Naive thymus-derived CD4-positive, alpha-beta T cell (primary cell): ENCODE measurements at regions of chr10 and their contacts with region 1.

Region 1: GRCh38 chr10:124719213-124719851 is 24.8 kb downstream of the FAM53B start:
- DNase-seq: peak in 8 of 9 donors; percentile 49 to 85 (median 80)
- ATAC-seq: peak; percentile 63
- H3K4me3 ChIP-seq: peak overlapping the region; percentile 19
- H3K4me3 Mint-ChIP-seq: peak overlapping the region; percentile 46 to 91 (median 73)
- H3K27ac ChIP-seq: peak overlapping the region; percentile 72
- H3K27ac Mint-ChIP-seq: peak overlapping the region; percentile 83 to 99 (median 94)
- H3K4me1 ChIP-seq: peaks cover 82 to 96% of the 10 kb centered on the region in 2 donors
- H3K4me1 Mint-ChIP-seq: peaks cover 80 to 99% (median 88%) of the 10 kb centered on the region in 7 donors
- H3K27me3 ChIP-seq: no peaks in the 10 kb centered on the region
- H3K27me3 Mint-ChIP-seq: no peaks in the 10 kb centered on the region

Region 2: DNA sequence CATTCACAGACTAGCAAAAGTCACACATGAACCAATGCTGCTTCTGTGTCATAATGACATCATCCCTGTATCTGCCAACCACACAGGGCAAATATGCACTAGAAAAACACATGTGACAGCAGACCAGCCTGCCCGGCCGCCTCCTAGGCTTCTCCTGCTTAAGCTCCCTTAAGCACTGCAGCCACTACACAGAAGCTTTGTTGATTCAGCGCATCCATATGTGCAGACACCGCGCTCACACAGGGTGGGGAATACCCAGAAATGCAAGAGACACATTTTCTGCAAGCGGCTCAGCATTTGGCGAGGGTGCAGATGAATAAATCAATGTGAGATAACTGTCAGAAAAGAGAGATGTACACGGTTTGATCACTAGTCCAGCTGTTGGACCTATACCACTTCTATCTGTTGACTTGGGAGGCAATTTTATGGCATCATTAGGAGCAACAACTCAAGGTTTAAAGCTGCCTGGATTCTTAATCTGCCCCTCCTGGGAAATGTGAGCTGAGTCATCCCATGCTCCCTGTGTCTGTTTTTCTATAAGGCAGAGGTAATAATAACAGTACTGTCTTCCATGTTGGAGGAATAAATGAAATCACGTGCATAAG is 861.2 kb before region 1 on chr10:
- CTCF ChIA-PET with region 1: no interaction called
- POLR2A ChIA-PET with region 1: no interaction called
- intact Hi-C with region 1: no loop called
- DNase-seq: no peak
- ATAC-seq: no peak
- H3K4me3 ChIP-seq: no peak overlapping the region
- H3K4me3 Mint-ChIP-seq: no peak overlapping the region
- H3K27ac ChIP-seq: no peak overlapping the region
- H3K27ac Mint-ChIP-seq: no peak overlapping the region
- H3K4me1 ChIP-seq: no peaks in the 10 kb centered on the region
- H3K4me1 Mint-ChIP-seq: no peaks in the 10 kb centered on the region
- H3K27me3 ChIP-seq: no peaks in the 10 kb centered on the region
- H3K27me3 Mint-ChIP-seq: peaks cover 0 to 22% (median 0%) of the 10 kb centered on the region in 5 donors

Region 3: DNA sequence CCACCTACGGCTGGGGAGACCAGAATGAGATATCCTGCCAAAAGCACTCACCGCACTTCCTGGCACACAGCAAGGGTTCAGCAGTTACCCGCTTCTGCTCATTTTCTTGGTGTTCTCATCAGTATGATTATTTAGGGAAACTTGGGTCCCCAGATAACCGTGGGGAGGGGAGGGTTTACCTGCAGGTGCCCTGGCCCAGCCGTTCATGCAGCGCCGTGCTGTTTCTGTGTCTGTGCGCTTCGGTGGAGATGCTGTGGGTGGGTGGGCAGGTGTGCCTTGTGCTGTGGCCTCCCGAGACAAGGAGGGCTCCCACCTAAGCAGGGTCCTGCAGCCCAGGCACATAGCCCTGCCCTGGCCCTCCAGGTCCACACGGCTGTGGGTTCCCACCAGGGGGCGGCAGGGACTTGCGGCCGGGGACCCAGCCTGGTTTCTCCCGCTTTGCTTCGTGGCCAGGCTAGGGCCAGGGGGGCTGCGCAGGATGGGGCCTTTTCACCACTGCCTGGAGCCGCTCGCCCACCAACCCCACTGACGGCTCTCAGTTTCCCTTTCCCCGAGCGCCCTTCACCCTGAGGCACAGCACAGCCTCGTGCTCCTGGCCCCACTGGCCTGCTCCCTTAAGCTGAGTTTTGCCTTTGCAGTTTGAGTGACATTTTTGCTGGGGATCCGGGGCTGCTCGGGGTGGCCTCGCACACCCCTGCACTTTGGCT is 179.2 kb before region 1 on chr10:
- CTCF ChIA-PET with region 1: interaction called, 7 read pairs
- POLR2A ChIA-PET with region 1: no interaction called
- intact Hi-C with region 1: loop called in 1 of 2 experiments (anchors 1 kb)
- DNase-seq: peak; percentile 34 to 70 (median 58)
- ATAC-seq: peak; percentile 83
- H3K4me3 ChIP-seq: no peak overlapping the region
- H3K4me3 Mint-ChIP-seq: peak overlapping the region in 1 of 10 donors; percentile 16
- H3K27ac ChIP-seq: no peak overlapping the region
- H3K27ac Mint-ChIP-seq: peak overlapping the region in 2 of 9 donors; percentile 12 to 28
- H3K4me1 ChIP-seq: peaks cover 0 to 10% of the 10 kb centered on the region in 2 donors
- H3K4me1 Mint-ChIP-seq: peaks cover 0 to 10% (median 7%) of the 10 kb centered on the region in 7 donors
- H3K27me3 ChIP-seq: no peaks in the 10 kb centered on the region
- H3K27me3 Mint-ChIP-seq: no peaks in the 10 kb centered on the region

Region 4: DNA sequence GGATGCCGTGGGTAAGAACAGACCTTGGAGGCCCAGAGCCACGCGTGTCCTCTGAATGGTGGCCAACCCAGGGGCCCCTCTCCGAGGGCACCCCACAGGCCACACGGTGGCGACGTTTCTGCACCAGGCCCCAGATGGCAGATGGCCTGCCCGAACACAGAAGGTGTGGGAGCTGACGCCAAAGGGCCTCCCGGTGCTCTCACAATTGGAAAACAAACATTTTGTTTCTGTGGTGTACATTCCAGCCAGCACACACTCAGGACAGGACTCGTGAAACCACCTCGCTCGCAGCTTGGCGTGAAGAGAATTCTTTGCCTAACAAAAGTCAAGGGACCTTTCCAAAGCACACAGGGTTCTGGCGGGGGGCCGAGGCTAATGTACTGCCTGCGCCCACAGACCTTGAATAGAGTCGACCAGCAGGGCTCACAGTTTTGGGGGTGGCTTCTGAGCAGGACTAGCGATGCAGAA is 87.2 kb before region 1 on chr10:
- CTCF ChIA-PET with region 1: interaction called, 21 read pairs
- POLR2A ChIA-PET with region 1: interaction called, 17 read pairs
- intact Hi-C with region 1: loop called in 1 of 2 experiments (anchors 1 kb)
- DNase-seq: peak in 2 of 9 donors; percentile 36 to 51
- ATAC-seq: peak; percentile 43
- H3K4me3 ChIP-seq: no peak overlapping the region
- H3K4me3 Mint-ChIP-seq: peak overlapping the region in 1 of 10 donors; percentile 7
- H3K27ac ChIP-seq: no peak overlapping the region
- H3K27ac Mint-ChIP-seq: peak overlapping the region in 2 of 9 donors; percentile 40 to 53
- H3K4me1 ChIP-seq: peaks cover 25 to 47% of the 10 kb centered on the region in 2 donors
- H3K4me1 Mint-ChIP-seq: peaks cover 29 to 78% (median 67%) of the 10 kb centered on the region in 7 donors
- H3K27me3 ChIP-seq: no peaks in the 10 kb centered on the region
- H3K27me3 Mint-ChIP-seq: peaks cover 0 to 8% (median 0%) of the 10 kb centered on the region in 5 donors

Region 5: DNA sequence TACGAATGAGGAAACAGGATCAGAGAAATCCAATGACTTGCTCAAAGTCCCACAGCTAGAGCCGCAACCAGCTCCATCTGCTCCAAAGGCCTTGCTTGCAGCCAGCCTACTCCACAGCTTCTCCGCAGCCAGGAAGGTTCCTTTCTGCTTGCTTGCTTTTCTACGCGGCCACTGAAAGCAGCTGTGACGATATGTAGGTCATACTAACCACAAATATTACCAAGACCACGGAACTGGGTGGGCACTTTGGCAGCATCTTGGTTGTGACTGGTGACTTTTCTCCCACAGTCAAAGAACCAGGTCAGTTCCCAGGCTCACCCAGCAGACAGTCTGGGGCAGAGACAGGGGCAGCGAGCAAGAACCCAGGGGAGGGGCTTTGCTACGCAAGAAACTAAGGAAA is 61.5 kb before region 1 on chr10:
- CTCF ChIA-PET with region 1: interaction called, 10 read pairs
- POLR2A ChIA-PET with region 1: interaction called, 11 read pairs
- intact Hi-C with region 1: no loop called
- DNase-seq: no peak
- ATAC-seq: peak; percentile 66
- H3K4me3 ChIP-seq: peak overlapping the region; percentile 29
- H3K4me3 Mint-ChIP-seq: peak overlapping the region in 7 of 10 donors; percentile 4 to 52 (median 28)
- H3K27ac ChIP-seq: no peak overlapping the region
- H3K27ac Mint-ChIP-seq: peak overlapping the region in 7 of 9 donors; percentile 33 to 80 (median 69)
- H3K4me1 ChIP-seq: peaks cover 45 to 84% of the 10 kb centered on the region in 2 donors
- H3K4me1 Mint-ChIP-seq: peaks cover 47 to 84% (median 72%) of the 10 kb centered on the region in 7 donors
- H3K27me3 ChIP-seq: no peaks in the 10 kb centered on the region
- H3K27me3 Mint-ChIP-seq: no peaks in the 10 kb centered on the region

Region 6: GRCh38 chr10:124677749-124678556 is 41.4 kb before region 1 on chr10:
- CTCF ChIA-PET with region 1: interaction called, 55 read pairs
- POLR2A ChIA-PET with region 1: interaction called, 24 read pairs
- intact Hi-C with region 1: loop called in 1 of 2 experiments (anchors 1 kb)
- DNase-seq: no peak
- ATAC-seq: no peak
- H3K4me3 ChIP-seq: peak overlapping the region; percentile 37
- H3K4me3 Mint-ChIP-seq: peak overlapping the region; percentile 70 to 93 (median 81)
- H3K27ac ChIP-seq: peak overlapping the region; percentile 47
- H3K27ac Mint-ChIP-seq: peak overlapping the region; percentile 79 to 97 (median 91)
- H3K4me1 ChIP-seq: peaks cover 77 to 91% of the 10 kb centered on the region in 2 donors
- H3K4me1 Mint-ChIP-seq: peaks cover 53 to 94% (median 85%) of the 10 kb centered on the region in 7 donors
- H3K27me3 ChIP-seq: no peaks in the 10 kb centered on the region
- H3K27me3 Mint-ChIP-seq: no peaks in the 10 kb centered on the region

Region 7: GRCh38 chr10:124697830-124698544 is 21.3 kb before region 1 on chr10:
- CTCF ChIA-PET with region 1: interaction called, 81 read pairs
- POLR2A ChIA-PET with region 1: interaction called, 271 read pairs
- intact Hi-C with region 1: loop called (anchors 1 kb)
- DNase-seq: peak in 4 of 9 donors; percentile 12 to 50 (median 41)
- ATAC-seq: peak; percentile 68
- H3K4me3 ChIP-seq: no peak overlapping the region
- H3K4me3 Mint-ChIP-seq: peak overlapping the region in 9 of 10 donors; percentile 53 to 82 (median 73)
- H3K27ac ChIP-seq: peak overlapping the region; percentile 67
- H3K27ac Mint-ChIP-seq: peak overlapping the region; percentile 84 to 97 (median 91)
- H3K4me1 ChIP-seq: peaks cover 66 to 90% of the 10 kb centered on the region in 2 donors
- H3K4me1 Mint-ChIP-seq: peaks cover 73 to 96% (median 94%) of the 10 kb centered on the region in 7 donors
- H3K27me3 ChIP-seq: no peaks in the 10 kb centered on the region
- H3K27me3 Mint-ChIP-seq: no peaks in the 10 kb centered on the region

Region 8: DNA sequence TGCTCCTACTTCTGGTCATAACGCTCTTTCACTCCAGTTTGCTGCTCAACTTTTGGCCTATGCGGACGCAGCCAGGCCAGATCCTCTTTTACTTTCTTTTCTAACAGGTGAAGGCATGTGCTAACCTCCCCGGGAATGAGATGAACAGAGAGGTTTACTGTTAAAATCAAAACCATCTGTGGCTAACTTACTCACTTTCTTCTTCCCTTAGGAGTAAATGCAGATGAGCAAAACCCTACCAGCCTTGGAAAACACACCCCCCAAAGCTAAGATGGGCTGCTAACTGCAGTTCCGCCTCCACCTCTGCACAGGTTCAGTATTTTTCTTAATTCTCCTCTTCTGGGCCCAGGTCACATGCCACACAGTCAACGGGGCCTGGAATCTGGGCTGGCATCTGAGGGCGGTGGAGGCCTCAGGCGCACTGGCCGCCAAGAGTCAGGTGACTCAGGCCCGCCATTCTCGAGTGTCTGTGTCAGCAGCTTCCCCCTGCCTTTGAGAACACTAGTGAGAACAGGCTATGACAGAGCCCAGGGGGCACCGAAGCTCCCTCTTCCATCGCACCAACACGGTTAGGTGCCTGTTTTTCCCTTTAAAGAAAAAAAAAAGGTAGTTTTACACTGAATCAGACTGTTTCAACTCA is 13.7 kb after region 1 on chr10:
- CTCF ChIA-PET with region 1: interaction called, 58 read pairs
- POLR2A ChIA-PET with region 1: interaction called, 122 read pairs
- intact Hi-C with region 1: loop called (anchors 1 kb)
- DNase-seq: peak in 2 of 9 donors; percentile 41 to 50
- ATAC-seq: peak; percentile 40
- H3K4me3 ChIP-seq: peak overlapping the region; percentile 49
- H3K4me3 Mint-ChIP-seq: peak overlapping the region; percentile 31 to 82 (median 78)
- H3K27ac ChIP-seq: peak overlapping the region; percentile 59
- H3K27ac Mint-ChIP-seq: peak overlapping the region; percentile 82 to 99 (median 87)
- H3K4me1 ChIP-seq: peaks cover 89 to 98% of the 10 kb centered on the region in 2 donors
- H3K4me1 Mint-ChIP-seq: peaks cover 62 to 100% (median 90%) of the 10 kb centered on the region in 7 donors
- H3K27me3 ChIP-seq: no peaks in the 10 kb centered on the region
- H3K27me3 Mint-ChIP-seq: no peaks in the 10 kb centered on the region

Region 9: DNA sequence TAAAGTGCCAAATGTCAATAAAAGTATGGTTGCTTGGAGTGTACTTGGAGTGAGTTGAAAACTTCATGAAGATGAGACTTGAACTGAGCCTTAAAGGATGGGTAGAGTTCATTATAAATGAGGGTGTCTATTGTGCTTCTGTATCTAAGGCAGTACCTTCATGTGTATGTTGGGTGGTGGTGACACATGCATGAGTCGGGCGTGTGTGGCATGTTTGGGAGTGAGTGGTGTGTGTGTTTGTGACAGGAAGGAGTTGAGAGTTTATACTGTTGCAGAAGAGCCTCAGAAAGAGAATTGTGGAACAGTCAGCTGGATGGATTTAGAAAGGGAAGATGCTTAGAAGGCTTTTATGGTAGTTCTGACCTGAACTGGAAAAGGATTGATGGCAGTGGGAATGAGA is 216.6 kb after region 1 on chr10:
- CTCF ChIA-PET with region 1: no interaction called
- POLR2A ChIA-PET with region 1: no interaction called
- intact Hi-C with region 1: no loop called
- DNase-seq: no peak
- ATAC-seq: no peak
- H3K4me3 ChIP-seq: no peak overlapping the region
- H3K4me3 Mint-ChIP-seq: peak overlapping the region in 7 of 10 donors; percentile 2 to 61 (median 26)
- H3K27ac ChIP-seq: no peak overlapping the region
- H3K27ac Mint-ChIP-seq: peak overlapping the region in 1 of 9 donors; percentile 26
- H3K4me1 ChIP-seq: peaks cover 5% of the 10 kb centered on the region in 2 donors
- H3K4me1 Mint-ChIP-seq: peaks cover 13 to 81% (median 66%) of the 10 kb centered on the region in 7 donors
- H3K27me3 ChIP-seq: no peaks in the 10 kb centered on the region
- H3K27me3 Mint-ChIP-seq: no peaks in the 10 kb centered on the region